ENCODE measurements at regions of chr6 and their contacts with region 1.

Region 1: GRCh38 chr6:150301846-150302519 is 66.8 kb upstream of the IYD start:
- DNase-seq: no peak
- ATAC-seq: no peak

Region 2: GRCh38 chr6:148874698-148875293 is 1427.2 kb before region 1 on chr6:
- intact Hi-C with region 1: loop called (anchors 5 kb)
- DNase-seq: no peak
- ATAC-seq: peak; percentile 15